ENCODE measurements at regions of chr12 and their contacts with region 1.

Region 1: GRCh38 chr12:69585189-69586062 is at the start of gene CCT2:
- DNase-seq: peak; percentile 97
- H3K4me3 ChIP-seq: peak within 1 kb of the TSS; percentile 16 to 98 (median 97)
- H3K27ac ChIP-seq: peak within 1 kb of the TSS; percentile 61
- H3K4me1 ChIP-seq: peaks cover 8% of the 10 kb centered on the region
- H3K27me3 ChIP-seq: no peaks in the 10 kb centered on the region
- CTCF ChIP-seq: peak in 1 of 2 donors; percentile 62
- POLR2A ChIP-seq: peak; percentile 93
- total RNA-seq, gene CCT2: 245 and 256 TPM in 2 replicates

Region 2: GRCh38 chr12:69239352-69239921 is 346.0 kb before region 1 on chr12 and contains the start of gene CPSF6:
- CTCF ChIA-PET with region 1: no interaction called
- POLR2A ChIA-PET with region 1: no interaction called
- dilution Hi-C with region 1: no loop called
- intact Hi-C with region 1: loop called (anchors 1 kb)
- DNase-seq: peak; percentile 95
- H3K4me3 ChIP-seq: peak within 1 kb of the TSS; percentile 60 to 99 (median 99)
- H3K27ac ChIP-seq: peak within 1 kb of the TSS; percentile 89
- H3K4me1 ChIP-seq: peaks cover 17% of the 10 kb centered on the region
- H3K27me3 ChIP-seq: peaks cover 2% of the 10 kb centered on the region in 2 experiments
- CTCF ChIP-seq: no peak
- POLR2A ChIP-seq: peak; percentile 93
- total RNA-seq, gene CPSF6: 86.2 and 91.7 TPM in 2 replicates

Region 3: GRCh38 chr12:69388371-69388770 is 197.1 kb before region 1 on chr12:
- CTCF ChIA-PET with region 1: interaction called, 5 read pairs
- POLR2A ChIA-PET with region 1: no interaction called
- dilution Hi-C with region 1: loop called (anchors 25 kb)
- intact Hi-C with region 1: loop called (anchors 5 kb)
- DNase-seq: peak; percentile 79
- H3K4me3 ChIP-seq: no peak overlapping the region
- H3K27ac ChIP-seq: no peak overlapping the region
- H3K4me1 ChIP-seq: peaks cover 6% of the 10 kb centered on the region
- H3K27me3 ChIP-seq: no peaks in the 10 kb centered on the region
- CTCF ChIP-seq: peak; percentile 37 to 41
- POLR2A ChIP-seq: no peak

Region 4: DNA sequence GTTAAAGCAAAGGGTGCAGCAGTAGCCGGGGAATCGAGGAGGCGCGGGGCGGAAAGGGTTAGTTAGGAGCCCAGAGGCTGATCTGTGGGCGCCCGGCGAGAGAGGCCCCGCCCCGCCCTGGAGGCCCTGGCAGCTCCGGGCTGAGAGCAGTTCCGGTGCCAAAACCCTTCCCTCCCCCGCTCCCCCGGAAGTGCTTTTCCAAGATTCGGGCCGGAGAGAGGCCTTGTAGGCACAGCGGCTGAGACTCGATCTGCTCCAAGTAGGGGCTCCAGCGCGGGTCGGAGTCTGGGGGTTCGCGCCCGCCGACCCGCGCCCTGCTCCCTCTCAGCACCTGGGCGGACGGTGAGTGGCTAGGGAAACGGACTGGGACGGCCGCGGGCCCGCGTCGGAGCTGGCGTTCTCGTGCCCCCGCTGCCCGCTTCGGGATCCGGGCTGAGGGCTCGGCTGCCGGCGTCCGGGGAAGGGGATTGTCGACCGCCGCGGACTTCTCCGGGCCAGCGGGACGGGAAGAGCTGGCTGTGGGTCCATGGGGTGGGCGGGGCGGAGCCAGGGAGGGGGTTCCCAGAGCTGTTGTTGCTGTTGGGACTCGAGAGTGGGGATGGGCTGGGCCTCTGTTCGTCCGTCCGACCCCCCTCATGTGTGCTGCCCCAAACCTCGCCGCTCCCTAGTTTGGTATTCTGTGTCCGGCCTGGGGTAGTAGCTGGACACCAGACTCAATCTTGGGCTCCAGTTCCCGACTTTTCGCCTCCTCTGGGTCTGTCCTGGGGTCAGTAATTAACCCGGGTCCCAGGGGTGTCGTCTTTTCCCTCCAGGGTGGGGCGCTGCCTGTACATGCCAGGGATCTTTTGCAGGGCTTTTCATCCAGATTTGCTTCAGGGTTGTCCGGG is 115.0 kb before region 1 on chr12 and contains the start of gene FRS2:
- CTCF ChIA-PET with region 1: no interaction called
- POLR2A ChIA-PET with region 1: interaction called, 3 read pairs
- dilution Hi-C with region 1: no loop called
- intact Hi-C with region 1: loop called (anchors 1 kb)
- DNase-seq: peak; percentile 88
- H3K4me3 ChIP-seq: peak within 1 kb of the TSS; percentile 53 to 89 (median 79)
- H3K27ac ChIP-seq: peak within 1 kb of the TSS; percentile 59
- H3K4me1 ChIP-seq: peaks cover 12% of the 10 kb centered on the region
- H3K27me3 ChIP-seq: no peaks in the 10 kb centered on the region
- CTCF ChIP-seq: peak in 1 of 2 donors; percentile 32
- POLR2A ChIP-seq: peak; percentile 96
- total RNA-seq, gene FRS2: 15.5 and 17.1 TPM in 2 replicates

Region 5: DNA sequence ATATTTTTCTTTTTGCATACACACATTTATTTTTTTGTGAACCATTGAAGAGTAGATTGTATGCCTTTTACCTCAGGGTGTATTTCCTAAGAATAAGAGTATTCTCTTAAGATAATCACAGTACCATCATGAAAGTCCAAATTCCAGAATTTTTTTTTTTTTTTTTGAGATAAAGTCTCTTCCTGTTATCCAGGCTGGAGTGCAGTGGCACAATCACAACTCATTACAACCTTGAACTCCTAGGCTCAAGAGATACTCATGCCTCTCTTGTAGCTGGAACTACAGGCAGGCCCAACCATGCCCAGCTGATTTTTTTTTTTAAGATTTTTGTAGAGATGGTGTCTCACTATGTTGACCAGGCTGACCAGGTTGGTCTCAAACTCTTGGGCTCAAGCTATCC is 104.3 kb before region 1 on chr12:
- CTCF ChIA-PET with region 1: no interaction called
- POLR2A ChIA-PET with region 1: no interaction called
- dilution Hi-C with region 1: no loop called
- intact Hi-C with region 1: no loop called
- DNase-seq: no peak
- H3K4me3 ChIP-seq: no peak overlapping the region
- H3K27ac ChIP-seq: no peak overlapping the region
- H3K4me1 ChIP-seq: peaks cover 7% of the 10 kb centered on the region
- H3K27me3 ChIP-seq: no peaks in the 10 kb centered on the region
- CTCF ChIP-seq: no peak
- POLR2A ChIP-seq: no peak

Region 6: DNA sequence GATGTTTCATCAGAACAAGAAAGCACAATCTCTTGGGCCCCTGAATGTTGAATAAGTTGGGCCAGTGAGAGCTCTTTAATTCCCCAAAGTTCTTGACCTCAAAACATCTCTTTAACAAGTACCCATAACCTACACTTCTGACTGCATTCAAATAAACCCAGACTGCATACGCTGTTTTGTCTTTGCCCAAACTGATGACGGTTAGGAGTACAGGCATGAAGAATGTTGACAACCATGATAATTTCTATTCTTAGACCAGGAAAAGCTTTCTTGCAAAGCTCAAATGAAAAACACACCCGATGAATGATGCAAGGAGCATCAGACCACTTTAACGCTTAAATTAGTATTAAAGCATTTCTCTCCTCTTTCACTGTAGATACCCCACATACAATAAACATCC is 141.5 kb after region 1 on chr12:
- CTCF ChIA-PET with region 1: no interaction called
- POLR2A ChIA-PET with region 1: no interaction called
- dilution Hi-C with region 1: no loop called
- intact Hi-C with region 1: no loop called
- DNase-seq: no peak
- H3K4me3 ChIP-seq: no peak overlapping the region
- H3K27ac ChIP-seq: no peak overlapping the region
- H3K4me1 ChIP-seq: peaks cover 6% of the 10 kb centered on the region
- H3K27me3 ChIP-seq: no peaks in the 10 kb centered on the region
- CTCF ChIP-seq: no peak
- POLR2A ChIP-seq: no peak

Region 7: GRCh38 chr12:69738351-69739286 is 153.2 kb after region 1 on chr12 and contains the start of gene RAB3IP:
- CTCF ChIA-PET with region 1: no interaction called
- POLR2A ChIA-PET with region 1: no interaction called
- dilution Hi-C with region 1: no loop called
- intact Hi-C with region 1: loop called (anchors 5 kb)
- DNase-seq: peak; percentile 76
- H3K4me3 ChIP-seq: peak within 1 kb of the TSS; percentile 46 to 61 (median 60)
- H3K27ac ChIP-seq: no peak within 1 kb of the TSS
- H3K4me1 ChIP-seq: peaks cover 7% of the 10 kb centered on the region
- H3K27me3 ChIP-seq: peaks cover 0 to 2% of the 10 kb centered on the region in 2 experiments
- CTCF ChIP-seq: peak; percentile 34 to 68
- POLR2A ChIP-seq: no peak
- total RNA-seq, gene RAB3IP: 12.1 and 13.3 TPM in 2 replicates

Measured in endothelial cell of umbilical vein (primary cell).